ENCODE measurements at regions of chr1 and their contacts with region 1.

Region 1: DNA sequence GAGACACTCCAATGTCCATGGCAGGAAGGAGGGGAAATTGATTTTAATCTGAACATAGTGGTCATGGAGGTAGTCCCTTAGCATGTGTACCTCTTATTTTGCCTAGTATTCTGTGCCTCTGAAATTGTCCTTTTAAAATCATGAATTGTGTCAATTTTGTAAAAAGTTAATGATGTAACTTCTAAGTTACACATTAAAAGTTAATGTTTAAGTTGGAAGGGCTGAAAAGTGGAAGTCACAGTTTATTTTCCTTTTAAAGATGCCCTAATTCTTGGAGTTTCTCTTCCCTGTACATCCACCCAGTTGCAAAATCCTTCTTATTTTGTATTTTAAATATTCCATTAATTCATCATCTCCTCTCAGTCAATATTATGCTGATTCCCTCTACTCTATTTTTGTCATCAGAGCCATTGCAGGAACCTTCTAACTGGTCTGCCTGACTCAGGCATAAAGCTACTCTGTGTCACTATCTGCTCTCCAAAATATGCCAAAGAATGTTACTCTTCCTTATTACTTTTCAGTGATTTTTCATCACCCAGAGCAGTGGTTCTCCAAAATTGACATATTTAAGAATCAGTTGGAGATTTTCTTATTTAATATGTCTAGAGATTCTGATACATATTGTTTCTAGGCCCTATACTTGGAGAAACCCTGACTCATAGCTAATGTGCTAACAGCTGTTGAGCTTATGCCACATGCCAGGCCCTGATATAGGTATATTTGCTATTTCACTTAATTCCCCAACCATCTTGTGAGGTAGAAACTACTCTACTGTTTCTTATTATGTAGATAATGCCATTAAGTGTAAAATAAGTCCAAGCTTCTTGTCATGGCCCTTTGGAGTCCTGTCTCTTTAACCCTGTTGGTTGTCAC is 5.1 kb downstream of the HOOK1 start:
- DNase-seq: no peak
- ATAC-seq: no peak

Region 2: GRCh38 chr1:59484096-59484495 is 335.7 kb before region 1 on chr1:
- intact Hi-C with region 1: no loop called
- DNase-seq: no peak
- ATAC-seq: no peak

Region 3: DNA sequence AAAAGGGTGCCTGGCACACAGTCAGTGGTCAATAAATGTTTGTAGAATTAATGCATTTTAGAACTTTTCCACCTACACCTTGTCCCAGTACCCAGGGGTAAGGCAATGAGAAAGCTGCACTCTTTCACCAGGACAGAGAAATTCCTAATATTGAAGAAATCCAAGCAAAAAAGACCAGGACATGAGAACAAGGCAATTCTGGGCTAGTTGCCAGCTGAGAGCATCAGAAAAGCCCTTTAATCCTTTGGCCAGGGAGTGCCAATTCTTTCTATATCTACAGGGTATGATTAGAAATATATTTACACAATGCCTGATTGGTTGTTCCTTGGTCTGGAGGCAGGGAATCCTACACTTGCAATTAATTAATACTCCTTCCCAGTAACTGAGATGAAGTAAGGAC is 770.1 kb after region 1 on chr1:
- intact Hi-C with region 1: loop called (anchors 5 kb)
- DNase-seq: no peak
- ATAC-seq: no peak